Activated T-helper 1 cell treated with anti-CD3 and anti-CD28 coated beads, Interleukin-12 subunit alpha, Interleukin-12 subunit beta, Interleukin-2, Interleukin-4 antibody, amounts not matched to agents 30 ng/mL and 10 ng/mL and 1 ng/mL, durations not matched to agents 14 hours and 24 hours and 36 hours (primary cell): ENCODE measurements at regions of chr3 and their contacts with region 1.

Region 1: DNA sequence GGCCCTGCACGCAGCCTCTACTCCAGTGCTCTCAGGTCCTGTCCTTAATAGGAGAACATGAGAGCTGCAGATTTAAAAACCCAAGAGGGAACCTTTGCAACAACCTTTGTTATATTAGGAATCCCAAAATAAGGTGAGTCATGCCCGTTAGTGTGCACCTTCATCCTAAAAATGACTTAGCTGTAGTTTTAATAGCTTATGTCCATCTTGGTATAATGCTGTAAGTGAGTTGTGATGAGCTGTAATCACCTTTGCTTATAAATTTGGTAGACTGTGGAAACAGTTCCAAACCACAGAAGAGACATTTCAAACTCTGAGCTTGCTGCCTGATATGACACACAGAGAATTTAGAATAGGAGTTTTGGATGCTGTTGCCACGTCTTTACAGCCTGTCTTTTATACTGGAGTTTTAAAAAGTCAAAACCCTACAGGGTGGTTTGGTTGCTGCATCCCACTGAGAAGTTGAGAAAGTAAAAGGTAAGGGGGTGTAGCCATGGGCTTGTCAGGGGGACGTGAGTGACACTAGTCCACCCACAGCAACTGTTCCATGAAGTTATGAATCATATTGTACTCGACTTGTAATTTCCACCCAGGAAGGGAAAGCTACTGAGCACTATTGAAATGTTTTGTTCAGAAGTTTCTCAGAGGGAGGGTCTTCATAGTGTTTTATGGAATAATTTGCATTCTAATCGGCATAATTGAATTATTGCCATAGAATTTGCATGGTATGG is 27.4 kb upstream of the CD47 start:
- DNase-seq: no peak
- H3K4me3 Mint-ChIP-seq: no peak overlapping the region
- H3K27ac Mint-ChIP-seq: peak overlapping the region; percentile 11
- H3K4me1 Mint-ChIP-seq: peaks cover 29% of the 10 kb centered on the region
- H3K27me3 Mint-ChIP-seq: peaks cover 8% of the 10 kb centered on the region

Region 2: GRCh38 chr3:108100906-108101660 is 17.1 kb before region 1 on chr3:
- intact Hi-C with region 1: loop called (anchors 1 kb)
- DNase-seq: peak; percentile 32
- H3K4me3 Mint-ChIP-seq: peak overlapping the region; percentile 1
- H3K27ac Mint-ChIP-seq: peak overlapping the region; percentile 77
- H3K4me1 Mint-ChIP-seq: peaks cover 29% of the 10 kb centered on the region
- H3K27me3 Mint-ChIP-seq: peaks cover 13% of the 10 kb centered on the region

Region 3: DNA sequence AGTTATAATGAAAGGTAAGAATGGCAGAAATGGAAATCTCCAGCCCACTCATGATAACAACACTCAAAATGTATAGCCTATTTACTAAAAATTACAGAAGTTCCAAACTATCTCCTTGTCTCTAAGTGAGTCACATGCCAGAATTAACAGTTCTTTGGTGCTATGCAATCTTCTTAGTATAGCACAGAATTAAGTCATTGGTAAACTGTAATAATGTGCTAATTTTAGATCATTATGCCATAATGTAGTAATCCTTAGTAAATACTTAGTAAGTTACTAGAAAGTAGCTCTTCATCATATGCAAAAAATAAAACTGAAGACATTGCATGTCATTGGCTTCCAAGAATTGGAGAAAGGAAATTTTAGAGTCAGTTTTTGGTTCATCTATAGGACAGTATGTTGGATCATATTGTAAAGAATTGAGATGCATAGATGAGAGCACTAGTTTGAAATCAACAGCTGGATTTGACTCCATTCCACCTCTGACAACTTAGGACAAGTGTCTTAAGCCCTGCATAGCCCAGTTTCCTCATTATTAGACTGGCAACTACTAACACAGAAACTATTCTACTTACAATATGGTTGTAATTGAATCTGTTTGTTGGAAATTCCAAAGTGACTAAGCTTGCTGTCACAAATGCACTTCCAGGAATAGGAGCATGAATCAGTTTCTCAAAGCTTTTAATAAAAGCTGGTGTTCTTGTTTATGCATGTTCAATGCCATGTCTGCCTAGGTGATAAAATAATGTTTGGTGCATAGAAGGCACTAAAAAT is 12.7 kb after region 1 on chr3:
- intact Hi-C with region 1: loop called (anchors 2 kb)
- DNase-seq: no peak
- H3K4me3 Mint-ChIP-seq: peak overlapping the region; percentile 24
- H3K27ac Mint-ChIP-seq: peak overlapping the region; percentile 72
- H3K4me1 Mint-ChIP-seq: peaks cover 90% of the 10 kb centered on the region
- H3K27me3 Mint-ChIP-seq: no peaks in the 10 kb centered on the region

Region 4: DNA sequence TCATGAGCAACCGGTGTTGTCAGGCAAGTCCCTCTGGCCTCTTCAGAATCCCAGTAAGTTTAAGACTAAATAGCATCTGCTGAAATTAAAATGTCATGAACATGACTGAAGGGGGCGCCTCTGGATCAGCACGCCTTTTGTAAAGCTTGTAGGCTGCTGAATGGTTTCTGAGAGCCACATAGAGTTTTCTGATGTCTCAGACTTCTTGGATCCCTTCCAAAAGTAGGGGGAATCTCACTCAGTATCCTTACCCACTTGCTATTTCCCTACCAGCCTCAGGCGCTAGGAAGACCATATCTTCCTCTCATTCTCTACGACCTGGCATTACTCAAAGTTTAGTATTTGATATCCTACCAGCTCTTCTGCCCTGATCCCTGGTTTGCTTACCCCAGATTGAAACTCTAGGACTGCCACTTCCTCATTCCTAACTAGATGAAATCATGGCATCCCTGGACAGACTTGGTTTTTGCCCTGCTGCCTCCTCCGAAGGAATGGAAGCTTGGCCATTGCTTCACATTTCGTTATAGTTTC is 35.3 kb after region 1 on chr3:
- intact Hi-C with region 1: no loop called
- DNase-seq: peak; percentile 35
- H3K4me3 Mint-ChIP-seq: no peak overlapping the region
- H3K27ac Mint-ChIP-seq: no peak overlapping the region
- H3K4me1 Mint-ChIP-seq: peaks cover 20% of the 10 kb centered on the region
- H3K27me3 Mint-ChIP-seq: no peaks in the 10 kb centered on the region